Heart right ventricle (tissue), 16 donors: ENCODE measurements at regions of chr5 and their contacts with region 1.

Region 1: DNA sequence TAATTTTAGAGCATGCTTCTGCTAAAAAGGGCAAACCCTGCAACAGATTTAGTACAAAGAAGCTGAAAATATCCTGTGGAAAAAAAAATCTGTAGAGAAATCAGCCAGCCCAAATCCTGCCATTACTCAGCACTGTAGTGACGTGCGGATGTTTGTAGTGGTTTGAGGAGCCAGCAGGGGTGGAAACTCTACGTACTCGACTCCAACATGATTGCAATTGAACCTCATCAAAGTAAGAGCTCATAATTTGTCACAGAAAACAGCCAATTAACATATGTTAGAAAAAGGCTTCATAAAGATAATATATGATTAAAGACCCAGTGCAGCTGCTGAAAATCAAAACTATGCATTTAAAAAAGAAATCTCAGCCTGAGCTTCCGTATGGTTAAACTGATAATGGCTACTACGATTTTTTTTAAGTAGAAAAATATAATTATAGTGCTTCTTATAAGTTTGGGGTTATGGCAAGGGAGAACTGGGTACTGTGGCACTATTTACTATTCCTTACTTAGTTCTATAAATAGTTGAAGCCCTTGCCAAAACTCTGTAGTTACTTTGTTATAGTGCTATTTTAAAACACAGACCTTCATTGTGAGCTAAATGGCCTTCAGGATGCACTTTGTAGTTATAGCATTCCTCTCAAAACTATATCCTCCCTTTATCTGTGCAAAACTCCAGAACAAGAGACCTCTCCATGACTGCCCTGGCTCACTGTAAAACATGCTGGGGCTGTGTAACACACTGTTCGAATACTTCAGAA is 49.4 kb downstream of the MEF2C start:
- DNase-seq: peak in 1 of 2 donors; percentile 81
- ATAC-seq: peak; percentile 71 to 89 (median 83)
- H3K4me3 ChIP-seq: peak overlapping the region in 8 of 10 donors; percentile 10 to 41 (median 32)
- H3K27ac ChIP-seq: peak overlapping the region; percentile 37 to 92 (median 77)
- H3K4me1 ChIP-seq: peaks cover 4 to 100% (median 87%) of the 10 kb centered on the region in 9 donors
- H3K27me3 ChIP-seq: no peaks in the 10 kb centered on the region
- CTCF ChIP-seq: peak in 2 of 9 donors; percentile 25 to 30

Region 2: GRCh38 chr5:88746438-88746882 is 87.1 kb before region 1 on chr5:
- intact Hi-C with region 1: loop called in 2 of 10 experiments (anchors 10 kb)
- DNase-seq: no peak
- ATAC-seq: peak in 2 of 8 donors; percentile 46 to 50
- H3K4me3 ChIP-seq: no peak overlapping the region
- H3K27ac ChIP-seq: peak overlapping the region in 1 of 10 donors; percentile 29
- H3K4me1 ChIP-seq: peaks cover 0 to 38% (median 18%) of the 10 kb centered on the region in 9 donors
- H3K27me3 ChIP-seq: no peaks in the 10 kb centered on the region
- CTCF ChIP-seq: no peak

Region 3: DNA sequence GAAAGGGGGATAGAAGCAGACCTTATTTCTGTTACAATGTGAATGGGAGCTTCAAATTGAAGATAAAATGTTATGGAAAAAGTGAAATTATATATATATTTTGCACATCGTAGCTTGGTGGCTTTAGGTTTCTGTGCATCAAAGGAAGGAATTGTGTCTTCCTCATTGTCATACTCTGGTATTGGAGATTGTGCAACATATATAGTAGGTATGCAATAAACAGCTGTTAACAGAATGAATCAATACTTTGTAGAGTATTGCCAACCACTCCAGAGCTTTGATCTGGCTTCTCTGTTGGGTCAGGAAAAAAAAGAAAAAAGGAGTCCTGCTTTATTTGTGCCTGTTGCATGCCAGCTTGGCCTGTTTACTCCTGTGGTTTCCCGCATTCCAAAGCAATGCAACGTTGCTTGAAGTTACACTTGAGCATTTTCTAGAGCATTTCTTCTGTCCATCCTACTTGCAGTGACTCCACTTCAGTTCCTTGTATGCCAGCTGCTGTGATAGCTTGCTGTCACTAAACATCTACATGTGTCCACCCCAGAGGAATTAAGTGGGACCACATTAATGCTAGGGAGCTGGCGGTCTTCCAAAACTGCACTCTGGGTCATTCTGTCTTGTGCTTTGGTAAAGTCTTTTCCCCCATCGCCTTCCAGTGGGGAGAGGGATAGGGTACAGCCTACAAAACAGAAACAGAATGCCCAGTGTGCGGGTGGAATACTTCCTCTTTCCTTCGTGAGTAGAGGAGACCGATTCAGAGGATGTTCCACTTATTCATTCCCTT is 111.4 kb after region 1 on chr5:
- intact Hi-C with region 1: no loop called
- DNase-seq: no peak
- ATAC-seq: no peak
- H3K4me3 ChIP-seq: no peak overlapping the region
- H3K27ac ChIP-seq: no peak overlapping the region
- H3K4me1 ChIP-seq: peaks cover 0 to 24% (median 0%) of the 10 kb centered on the region in 9 donors
- H3K27me3 ChIP-seq: no peaks in the 10 kb centered on the region
- CTCF ChIP-seq: no peak